H1 (cell line): ENCODE measurements at regions of chr15 and their contacts with region 1.

Region 1: GRCh38 chr15:51286791-51287190 is 51.6 kb downstream of the CYP19A1 start:
- DNase-seq: no peak
- H3K4me3 ChIP-seq: no peak overlapping the region
- H3K27ac ChIP-seq: no peak overlapping the region
- H3K4me1 ChIP-seq: no peaks in the 10 kb centered on the region
- H3K27me3 ChIP-seq: no peaks in the 10 kb centered on the region
- CTCF ChIP-seq: peak; percentile 32 to 45 (median 34); a peak in 3 of 4 replicates
- EP300 ChIP-seq: no peak
- POLR2A ChIP-seq: no peak
- RAD21 ChIP-seq: peak; percentile 42 to 48; a peak in 3 of 4 replicates

Region 2: GRCh38 chr15:51011212-51011611 is 275.6 kb before region 1 on chr15:
- CTCF ChIA-PET with region 1: no interaction called
- POLR2A ChIA-PET with region 1: no interaction called
- DNase-seq: no peak
- H3K4me3 ChIP-seq: no peak overlapping the region
- H3K27ac ChIP-seq: no peak overlapping the region
- H3K4me1 ChIP-seq: no peaks in the 10 kb centered on the region
- H3K27me3 ChIP-seq: no peaks in the 10 kb centered on the region
- CTCF ChIP-seq: no peak
- EP300 ChIP-seq: no peak
- POLR2A ChIP-seq: no peak
- RAD21 ChIP-seq: no peak

Region 3: DNA sequence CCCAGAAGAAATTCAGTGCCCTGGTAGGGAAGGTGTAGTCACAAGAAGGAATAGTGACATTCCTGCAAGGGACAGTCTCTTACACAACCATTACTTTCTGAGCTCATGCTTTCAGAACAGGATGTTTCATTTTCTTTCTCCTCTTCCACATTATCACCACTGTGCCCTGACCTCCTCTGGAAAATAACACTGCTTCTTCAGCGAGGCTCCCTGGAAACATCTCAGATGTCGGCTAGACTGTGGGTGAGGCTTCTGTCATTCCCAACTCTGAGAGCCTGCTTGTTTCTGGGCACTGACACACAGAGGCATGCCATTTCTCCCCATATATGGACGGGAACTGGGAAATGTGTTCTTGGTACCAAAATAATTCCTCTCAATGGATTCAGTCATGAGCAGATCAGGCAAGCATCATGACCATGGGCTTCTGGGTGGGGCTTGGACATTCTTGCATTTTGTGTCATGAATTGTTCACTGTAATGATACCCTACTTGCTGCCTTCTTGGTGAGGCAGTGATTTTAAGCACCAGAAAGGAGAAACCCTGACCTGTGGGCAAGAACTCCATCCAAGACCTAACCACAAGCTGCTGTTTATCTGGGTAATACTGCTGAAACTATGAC is 177.7 kb before region 1 on chr15:
- CTCF ChIA-PET with region 1: no interaction called
- POLR2A ChIA-PET with region 1: no interaction called
- DNase-seq: no peak
- H3K4me3 ChIP-seq: no peak overlapping the region
- H3K27ac ChIP-seq: no peak overlapping the region
- H3K4me1 ChIP-seq: no peaks in the 10 kb centered on the region
- H3K27me3 ChIP-seq: no peaks in the 10 kb centered on the region
- CTCF ChIP-seq: no peak
- EP300 ChIP-seq: no peak
- POLR2A ChIP-seq: no peak
- RAD21 ChIP-seq: no peak

Region 4: DNA sequence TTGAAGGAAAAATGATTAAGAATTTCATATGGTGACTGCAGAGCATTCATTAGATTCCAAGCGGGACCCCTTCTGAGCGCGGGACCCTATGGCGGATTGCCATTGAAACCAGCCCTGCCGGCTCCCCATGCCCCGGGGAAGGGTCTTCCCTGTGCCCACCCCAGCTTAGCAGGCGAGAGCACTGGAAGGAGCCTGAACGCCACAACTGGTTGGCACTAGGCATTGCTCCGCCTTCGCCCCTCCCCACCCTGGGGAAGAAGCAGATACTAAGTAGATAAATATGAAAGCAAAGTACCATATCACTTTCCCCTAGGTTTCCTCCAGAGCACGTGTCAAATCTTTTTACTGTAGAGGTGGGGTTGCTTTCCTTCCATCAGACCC is 19.1 kb before region 1 on chr15:
- CTCF ChIA-PET with region 1: interaction called, 28 read pairs
- POLR2A ChIA-PET with region 1: no interaction called
- DNase-seq: peak in 1 of 2 experiments; percentile 52
- H3K4me3 ChIP-seq: peak overlapping the region; percentile 53 to 69 (median 56)
- H3K27ac ChIP-seq: no peak overlapping the region
- H3K4me1 ChIP-seq: peaks cover 0 to 8% (median 3%) of the 10 kb centered on the region in 4 experiments; a peak in 5 of 7 replicates
- H3K27me3 ChIP-seq: peaks cover 3 to 29% (median 25%) of the 10 kb centered on the region in 4 experiments
- CTCF ChIP-seq: no peak
- EP300 ChIP-seq: no peak
- POLR2A ChIP-seq: no peak
- RAD21 ChIP-seq: no peak

Region 5: GRCh38 chr15:51299187-51300066 is 12.6 kb after region 1 on chr15:
- CTCF ChIA-PET with region 1: interaction called, 20 read pairs
- POLR2A ChIA-PET with region 1: interaction called, 4 read pairs
- DNase-seq: no peak
- H3K4me3 ChIP-seq: no peak overlapping the region
- H3K27ac ChIP-seq: no peak overlapping the region
- H3K4me1 ChIP-seq: no peaks in the 10 kb centered on the region
- H3K27me3 ChIP-seq: no peaks in the 10 kb centered on the region; a peak in 1 of 7 replicates
- CTCF ChIP-seq: no peak
- EP300 ChIP-seq: no peak
- POLR2A ChIP-seq: no peak
- RAD21 ChIP-seq: no peak

Region 6: GRCh38 chr15:51390966-51391432 is 104.2 kb after region 1 on chr15:
- CTCF ChIA-PET with region 1: interaction called, 11 read pairs
- POLR2A ChIA-PET with region 1: no interaction called
- DNase-seq: peak in 1 of 2 experiments; percentile 62
- H3K4me3 ChIP-seq: no peak overlapping the region
- H3K27ac ChIP-seq: no peak overlapping the region
- H3K4me1 ChIP-seq: peaks cover 6 to 14% (median 10%) of the 10 kb centered on the region in 4 experiments; a peak in 6 of 7 replicates
- H3K27me3 ChIP-seq: no peaks in the 10 kb centered on the region
- CTCF ChIP-seq: no peak
- EP300 ChIP-seq: no peak
- POLR2A ChIP-seq: no peak
- RAD21 ChIP-seq: no peak